CD8-positive, alpha-beta memory T cell (primary cell): ENCODE measurements at regions of chr19 and their contacts with region 1.

Region 1: GRCh38 chr19:18117692-18118378 is 20.3 kb downstream of the MAST3 start:
- DNase-seq: peak; percentile 95 to 97 (median 96)
- H3K4me3 ChIP-seq: peak overlapping the region; percentile 91
- H3K4me3 Mint-ChIP-seq: peak overlapping the region; percentile 86 to 97 (median 92)
- H3K27ac ChIP-seq: peak overlapping the region; percentile 72
- H3K27ac Mint-ChIP-seq: peak overlapping the region in 7 of 8 donors; percentile 86 to 100 (median 98)
- H3K4me1 ChIP-seq: peaks cover 32% of the 10 kb centered on the region
- H3K4me1 Mint-ChIP-seq: peaks cover 30 to 42% (median 31%) of the 10 kb centered on the region in 3 donors
- H3K27me3 ChIP-seq: no peaks in the 10 kb centered on the region
- H3K27me3 Mint-ChIP-seq: peaks cover 0 to 2% of the 10 kb centered on the region in 2 donors

Region 2: DNA sequence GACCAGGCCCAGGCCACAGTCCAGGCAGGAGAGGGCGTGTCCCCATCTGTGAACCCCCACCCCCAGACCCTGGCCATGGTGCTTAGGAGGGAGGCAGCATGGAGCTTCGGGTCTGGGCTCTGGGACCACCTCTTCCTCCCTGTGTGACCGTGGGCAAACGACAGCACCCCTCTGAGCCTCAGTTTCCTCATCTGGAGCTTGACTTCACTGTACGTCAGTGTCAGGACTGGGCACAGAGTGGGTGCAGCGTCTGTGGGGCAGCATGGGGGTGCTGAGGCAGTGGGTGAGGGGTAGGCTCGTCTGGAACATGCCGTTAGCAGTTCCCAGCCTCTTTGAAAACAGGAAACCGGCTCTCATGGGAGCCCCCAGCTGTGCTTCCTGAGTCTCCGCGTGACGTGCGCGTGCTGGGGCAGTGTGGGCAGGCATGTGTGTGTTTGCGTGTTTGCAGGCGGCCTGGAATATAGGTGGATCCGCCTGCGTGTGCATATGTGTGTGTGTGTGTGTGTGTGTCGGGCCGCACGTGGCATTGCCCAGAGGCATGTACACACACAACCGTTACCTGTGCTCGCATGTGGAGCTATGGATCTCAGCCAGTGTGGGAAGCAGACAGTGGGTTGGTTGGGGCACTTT is 94.1 kb before region 1 on chr19:
- CTCF ChIA-PET with region 1: no interaction called
- POLR2A ChIA-PET with region 1: no interaction called
- DNase-seq: peak; percentile 31 to 93 (median 67)
- H3K4me3 ChIP-seq: peak overlapping the region; percentile 43
- H3K4me3 Mint-ChIP-seq: peak overlapping the region in 6 of 7 donors; percentile 34 to 72 (median 59)
- H3K27ac ChIP-seq: no peak overlapping the region
- H3K27ac Mint-ChIP-seq: peak overlapping the region; percentile 65 to 93 (median 90)
- H3K4me1 ChIP-seq: peaks cover 40% of the 10 kb centered on the region
- H3K4me1 Mint-ChIP-seq: peaks cover 38 to 53% (median 43%) of the 10 kb centered on the region in 3 donors
- H3K27me3 ChIP-seq: no peaks in the 10 kb centered on the region
- H3K27me3 Mint-ChIP-seq: peaks cover 0 to 1% of the 10 kb centered on the region in 2 donors

Region 3: GRCh38 chr19:18053576-18054219 is 64.1 kb before region 1 on chr19:
- CTCF ChIA-PET with region 1: no interaction called
- POLR2A ChIA-PET with region 1: no interaction called
- DNase-seq: no peak
- H3K4me3 ChIP-seq: no peak overlapping the region
- H3K4me3 Mint-ChIP-seq: no peak overlapping the region
- H3K27ac ChIP-seq: no peak overlapping the region
- H3K27ac Mint-ChIP-seq: peak overlapping the region in 2 of 8 donors; percentile 5 to 77
- H3K4me1 ChIP-seq: peaks cover 11% of the 10 kb centered on the region
- H3K4me1 Mint-ChIP-seq: peaks cover 12 to 29% (median 16%) of the 10 kb centered on the region in 3 donors
- H3K27me3 ChIP-seq: no peaks in the 10 kb centered on the region
- H3K27me3 Mint-ChIP-seq: peaks cover 0 to 1% of the 10 kb centered on the region in 2 donors

Region 4: DNA sequence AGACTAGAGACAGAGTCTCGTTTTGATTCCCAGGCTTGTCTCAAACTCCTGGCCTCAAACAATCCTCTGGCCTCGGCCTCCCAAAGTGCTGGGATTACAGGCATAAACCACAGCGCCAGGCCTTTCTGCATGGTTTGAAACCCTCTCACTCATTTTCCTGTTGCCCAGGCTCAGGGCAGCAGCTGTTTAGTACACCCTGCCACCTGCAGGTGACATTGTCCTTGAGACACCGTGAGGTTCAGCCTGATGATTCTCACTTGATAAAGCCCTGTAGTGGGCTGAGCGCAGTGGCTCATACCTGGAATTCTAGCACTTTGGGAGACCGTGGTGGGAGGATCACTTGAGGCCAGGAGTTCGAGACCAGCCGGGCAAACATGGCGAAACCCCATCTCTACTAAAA is 43.6 kb before region 1 on chr19:
- CTCF ChIA-PET with region 1: no interaction called
- POLR2A ChIA-PET with region 1: no interaction called
- DNase-seq: no peak
- H3K4me3 ChIP-seq: no peak overlapping the region
- H3K4me3 Mint-ChIP-seq: no peak overlapping the region
- H3K27ac ChIP-seq: no peak overlapping the region
- H3K27ac Mint-ChIP-seq: peak overlapping the region in 3 of 8 donors; percentile 23 to 68 (median 62)
- H3K4me1 ChIP-seq: peaks cover 14% of the 10 kb centered on the region
- H3K4me1 Mint-ChIP-seq: peaks cover 14 to 15% (median 15%) of the 10 kb centered on the region in 3 donors
- H3K27me3 ChIP-seq: no peaks in the 10 kb centered on the region
- H3K27me3 Mint-ChIP-seq: no peaks in the 10 kb centered on the region

Region 5: DNA sequence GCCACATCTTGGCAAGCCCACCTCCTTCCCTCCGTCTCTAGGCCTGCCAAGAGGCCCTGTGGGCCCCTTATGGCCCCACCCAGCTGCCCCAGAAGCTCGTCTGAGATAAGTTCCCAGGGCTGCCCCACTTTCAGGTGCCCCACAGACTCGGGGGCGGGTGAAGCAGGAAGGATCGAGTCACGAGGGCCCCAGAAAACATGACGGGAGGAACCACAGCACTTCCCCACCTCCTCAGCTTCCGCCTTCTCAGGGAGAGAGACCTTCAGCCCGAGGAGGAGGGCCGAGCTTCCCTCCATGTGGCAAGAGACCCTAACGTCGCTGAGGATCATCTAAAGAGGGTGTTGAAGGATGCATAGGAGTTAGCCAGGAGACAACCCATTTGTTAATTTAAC is 26.6 kb before region 1 on chr19:
- CTCF ChIA-PET with region 1: interaction called, 15 read pairs
- POLR2A ChIA-PET with region 1: interaction called, 7 read pairs
- DNase-seq: peak; percentile 76 to 89 (median 83)
- H3K4me3 ChIP-seq: peak overlapping the region; percentile 41
- H3K4me3 Mint-ChIP-seq: peak overlapping the region; percentile 25 to 86 (median 74)
- H3K27ac ChIP-seq: peak overlapping the region; percentile 75
- H3K27ac Mint-ChIP-seq: peak overlapping the region; percentile 96 to 100 (median 98)
- H3K4me1 ChIP-seq: peaks cover 62% of the 10 kb centered on the region
- H3K4me1 Mint-ChIP-seq: peaks cover 49 to 63% (median 57%) of the 10 kb centered on the region in 3 donors
- H3K27me3 ChIP-seq: no peaks in the 10 kb centered on the region
- H3K27me3 Mint-ChIP-seq: peaks cover 0 to 3% of the 10 kb centered on the region in 2 donors

Region 6: DNA sequence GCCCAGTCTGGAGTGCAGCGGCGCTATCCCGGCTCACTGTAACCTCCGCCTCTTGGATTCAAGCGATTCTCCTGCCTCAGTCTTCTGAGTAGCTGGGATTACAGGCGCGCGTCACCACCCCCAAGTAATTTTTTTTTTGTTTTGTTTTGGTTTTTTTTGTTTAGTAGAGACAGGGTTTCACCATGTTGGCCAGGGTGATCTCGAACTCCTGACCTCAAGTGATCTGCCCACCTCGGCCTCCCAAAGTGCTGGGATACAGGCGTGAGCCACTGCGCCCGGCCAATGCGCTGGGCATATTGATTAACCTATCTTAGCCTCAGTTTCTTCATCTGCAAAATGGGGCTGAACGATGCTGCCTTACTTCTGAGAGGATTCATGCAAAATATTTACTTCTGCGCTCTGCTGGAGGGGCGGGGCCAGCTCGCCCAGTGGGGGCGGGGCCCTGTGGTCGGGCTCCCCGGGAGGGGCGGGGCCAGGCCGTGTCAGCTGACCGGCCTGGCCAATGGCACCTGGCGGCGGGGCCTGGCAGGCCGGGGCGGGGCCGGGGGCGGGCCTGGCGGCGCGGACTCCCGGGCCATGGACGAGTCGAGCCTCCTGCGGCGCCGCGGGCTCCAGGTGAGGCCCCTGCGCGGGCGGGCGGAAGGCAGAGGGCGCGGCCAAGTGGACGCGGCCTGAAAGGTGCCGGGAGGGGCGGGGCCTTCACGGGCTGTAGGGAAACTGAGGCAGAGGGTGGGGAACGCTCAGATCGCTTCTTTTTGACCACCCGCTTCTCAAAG is 20.4 kb before region 1 on chr19 and contains the start of gene MAST3:
- CTCF ChIA-PET with region 1: interaction called, 19 read pairs
- POLR2A ChIA-PET with region 1: interaction called, 12 read pairs
- DNase-seq: peak; percentile 88 to 93 (median 91)
- H3K4me3 ChIP-seq: peak within 1 kb of the TSS; percentile 83
- H3K4me3 Mint-ChIP-seq: peak within 1 kb of the TSS; percentile 86 to 95 (median 88)
- H3K27ac ChIP-seq: peak within 1 kb of the TSS; percentile 47
- H3K27ac Mint-ChIP-seq: peak within 1 kb of the TSS; percentile 68 to 97 (median 89)
- H3K4me1 ChIP-seq: peaks cover 39% of the 10 kb centered on the region
- H3K4me1 Mint-ChIP-seq: peaks cover 26 to 39% (median 30%) of the 10 kb centered on the region in 3 donors
- H3K27me3 ChIP-seq: no peaks in the 10 kb centered on the region
- H3K27me3 Mint-ChIP-seq: no peaks in the 10 kb centered on the region
- total RNA-seq, gene MAST3: 15.0 to 15.9 TPM

Region 7: GRCh38 chr19:18102916-18103542 is 14.8 kb before region 1 on chr19:
- CTCF ChIA-PET with region 1: interaction called, 19 read pairs
- POLR2A ChIA-PET with region 1: interaction called, 12 read pairs
- DNase-seq: no peak
- H3K4me3 ChIP-seq: no peak overlapping the region
- H3K4me3 Mint-ChIP-seq: peak overlapping the region in 2 of 7 donors; percentile 42 to 56
- H3K27ac ChIP-seq: no peak overlapping the region
- H3K27ac Mint-ChIP-seq: peak overlapping the region in 3 of 8 donors; percentile 11 to 94 (median 83)
- H3K4me1 ChIP-seq: peaks cover 28% of the 10 kb centered on the region
- H3K4me1 Mint-ChIP-seq: peaks cover 26 to 30% (median 30%) of the 10 kb centered on the region in 3 donors
- H3K27me3 ChIP-seq: no peaks in the 10 kb centered on the region
- H3K27me3 Mint-ChIP-seq: no peaks in the 10 kb centered on the region

Region 8: DNA sequence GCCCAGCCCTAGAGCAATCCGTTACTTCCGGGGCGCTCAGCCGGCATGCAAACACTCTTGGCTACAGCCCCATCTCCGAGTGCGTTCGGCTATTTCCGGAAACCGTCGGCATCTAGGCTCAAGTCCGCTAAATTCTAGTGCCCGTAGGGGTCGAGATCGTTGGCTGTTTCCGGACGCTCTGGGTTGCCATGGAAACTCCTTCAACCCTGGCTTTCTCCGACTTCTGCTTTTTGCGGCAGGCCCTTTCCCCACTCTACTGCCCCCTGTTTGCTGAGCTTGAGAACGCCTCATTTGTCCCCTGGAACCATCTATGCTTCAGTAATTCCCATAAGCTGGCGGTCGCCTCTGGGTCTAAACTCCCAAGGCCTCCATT is 34.6 kb after region 1 on chr19:
- CTCF ChIA-PET with region 1: interaction called, 22 read pairs
- POLR2A ChIA-PET with region 1: interaction called, 20 read pairs
- DNase-seq: peak; percentile 96 to 99 (median 98)
- H3K4me3 ChIP-seq: peak overlapping the region; percentile 94
- H3K4me3 Mint-ChIP-seq: peak overlapping the region; percentile 81 to 92 (median 87)
- H3K27ac ChIP-seq: peak overlapping the region; percentile 88
- H3K27ac Mint-ChIP-seq: peak overlapping the region; percentile 94 to 98 (median 94)
- H3K4me1 ChIP-seq: peaks cover 21% of the 10 kb centered on the region
- H3K4me1 Mint-ChIP-seq: peaks cover 29 to 37% (median 33%) of the 10 kb centered on the region in 3 donors
- H3K27me3 ChIP-seq: no peaks in the 10 kb centered on the region
- H3K27me3 Mint-ChIP-seq: no peaks in the 10 kb centered on the region

Region 9: DNA sequence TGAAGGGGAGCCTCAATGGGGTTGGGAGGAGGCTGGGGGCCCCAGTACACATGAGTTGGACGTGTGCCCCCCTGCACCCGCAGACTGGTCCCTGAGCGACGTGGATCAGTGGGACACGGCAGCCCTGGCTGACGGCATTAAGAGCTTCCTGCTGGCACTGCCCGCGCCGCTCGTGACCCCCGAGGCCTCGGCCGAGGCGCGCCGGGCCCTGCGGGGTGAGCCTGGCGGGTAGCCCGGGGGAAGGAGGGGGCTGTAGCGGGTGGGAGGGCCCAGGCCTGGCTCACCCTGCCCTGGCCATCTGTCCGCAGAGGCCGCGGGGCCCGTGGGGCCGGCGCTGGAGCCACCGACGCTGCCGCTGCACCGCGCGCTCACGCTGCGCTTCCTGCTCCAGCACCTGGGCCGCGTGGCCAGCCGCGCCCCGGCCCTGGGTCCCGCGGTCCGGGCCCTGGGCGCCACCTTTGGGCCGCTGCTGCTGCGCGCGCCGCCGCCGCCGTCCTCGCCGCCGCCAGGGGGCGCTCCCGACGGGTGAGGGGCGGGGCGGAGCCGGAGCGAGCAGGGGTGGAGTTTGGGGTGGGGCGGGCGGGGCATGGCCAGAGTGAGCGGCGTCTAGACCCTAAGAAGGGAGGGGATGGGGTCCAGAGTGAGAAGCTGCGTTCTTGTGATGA is 43.3 kb after region 1 on chr19:
- CTCF ChIA-PET with region 1: interaction called, 28 read pairs
- POLR2A ChIA-PET with region 1: no interaction called
- DNase-seq: peak; percentile 77 to 84 (median 80)
- H3K4me3 ChIP-seq: no peak overlapping the region
- H3K4me3 Mint-ChIP-seq: peak overlapping the region in 6 of 7 donors; percentile 24 to 60 (median 44)
- H3K27ac ChIP-seq: peak overlapping the region; percentile 61
- H3K27ac Mint-ChIP-seq: peak overlapping the region in 2 of 8 donors; percentile 22 to 88
- H3K4me1 ChIP-seq: peaks cover 13% of the 10 kb centered on the region
- H3K4me1 Mint-ChIP-seq: peaks cover 8 to 19% (median 9%) of the 10 kb centered on the region in 3 donors
- H3K27me3 ChIP-seq: no peaks in the 10 kb centered on the region
- H3K27me3 Mint-ChIP-seq: no peaks in the 10 kb centered on the region

Region 10: DNA sequence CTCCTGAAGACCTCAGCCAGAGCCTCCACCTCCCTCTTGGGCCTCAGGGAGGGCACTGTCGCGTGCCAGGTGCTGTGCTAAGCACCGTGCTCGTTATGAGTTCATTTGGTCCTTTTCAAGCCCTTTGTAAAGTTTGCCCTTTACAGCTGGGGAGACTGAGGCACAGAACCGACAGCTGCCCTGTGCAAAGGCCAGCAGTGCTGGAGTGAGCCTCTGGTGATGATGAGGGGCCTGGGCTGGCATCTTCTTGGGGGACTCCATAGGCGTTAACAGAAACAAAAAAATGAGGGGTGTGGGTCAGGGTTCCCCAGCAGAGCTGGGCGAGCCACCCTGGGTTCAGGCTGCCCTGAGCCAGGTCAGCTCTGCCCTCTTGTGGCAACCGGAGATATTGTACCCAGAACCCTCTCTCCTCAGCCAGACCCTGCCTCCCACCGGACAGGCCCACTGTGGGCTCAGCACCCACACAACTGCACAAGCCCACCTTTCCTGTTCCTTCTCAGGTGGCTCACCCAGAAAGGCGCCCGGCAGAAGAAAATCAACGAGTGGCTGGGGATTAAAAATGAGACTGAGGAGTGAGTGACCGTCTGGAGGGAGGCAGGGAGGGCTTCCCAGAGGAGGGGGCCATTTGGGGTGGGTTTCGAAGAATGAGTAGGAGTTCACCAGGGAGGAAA is 50.3 kb after region 1 on chr19:
- CTCF ChIA-PET with region 1: interaction called, 16 read pairs
- POLR2A ChIA-PET with region 1: no interaction called
- DNase-seq: peak; percentile 35 to 68 (median 49)
- H3K4me3 ChIP-seq: no peak overlapping the region
- H3K4me3 Mint-ChIP-seq: peak overlapping the region in 1 of 7 donors; percentile 39
- H3K27ac ChIP-seq: no peak overlapping the region
- H3K27ac Mint-ChIP-seq: peak overlapping the region in 4 of 8 donors; percentile 23 to 75 (median 56)
- H3K4me1 ChIP-seq: peaks cover under 1% of the 10 kb centered on the region
- H3K4me1 Mint-ChIP-seq: peaks cover 0 to 5% (median 4%) of the 10 kb centered on the region in 3 donors
- H3K27me3 ChIP-seq: no peaks in the 10 kb centered on the region
- H3K27me3 Mint-ChIP-seq: no peaks in the 10 kb centered on the region

Region 11: GRCh38 chr19:18306888-18307260 is 189.0 kb after region 1 on chr19:
- CTCF ChIA-PET with region 1: no interaction called
- POLR2A ChIA-PET with region 1: no interaction called
- DNase-seq: peak in 1 of 5 donors; percentile 66
- H3K4me3 ChIP-seq: peak overlapping the region; percentile 8
- H3K4me3 Mint-ChIP-seq: peak overlapping the region; percentile 60 to 96 (median 83)
- H3K27ac ChIP-seq: no peak overlapping the region
- H3K27ac Mint-ChIP-seq: peak overlapping the region; percentile 38 to 99 (median 96)
- H3K4me1 ChIP-seq: peaks cover 46% of the 10 kb centered on the region
- H3K4me1 Mint-ChIP-seq: peaks cover 36 to 51% (median 43%) of the 10 kb centered on the region in 3 donors
- H3K27me3 ChIP-seq: no peaks in the 10 kb centered on the region
- H3K27me3 Mint-ChIP-seq: peaks cover 0 to 1% of the 10 kb centered on the region in 2 donors